ENCODE measurements at regions of chr1 and their contacts with region 1.

Region 1: GRCh38 chr1:240189386-240189989 is 97.8 kb downstream of the FMN2 start:
- DNase-seq: peak; percentile 53
- ATAC-seq: no peak
- H3K4me3 ChIP-seq: no peak overlapping the region
- H3K27ac ChIP-seq: no peak overlapping the region
- H3K4me1 ChIP-seq: no peaks in the 10 kb centered on the region
- H3K27me3 ChIP-seq: no peaks in the 10 kb centered on the region; the same call in 1 of the 2 replicates
- CTCF ChIP-seq: peak; percentile 72
- POLR2A ChIP-seq: no peak
- RAD21 ChIP-seq: peak; percentile 68

Region 2: DNA sequence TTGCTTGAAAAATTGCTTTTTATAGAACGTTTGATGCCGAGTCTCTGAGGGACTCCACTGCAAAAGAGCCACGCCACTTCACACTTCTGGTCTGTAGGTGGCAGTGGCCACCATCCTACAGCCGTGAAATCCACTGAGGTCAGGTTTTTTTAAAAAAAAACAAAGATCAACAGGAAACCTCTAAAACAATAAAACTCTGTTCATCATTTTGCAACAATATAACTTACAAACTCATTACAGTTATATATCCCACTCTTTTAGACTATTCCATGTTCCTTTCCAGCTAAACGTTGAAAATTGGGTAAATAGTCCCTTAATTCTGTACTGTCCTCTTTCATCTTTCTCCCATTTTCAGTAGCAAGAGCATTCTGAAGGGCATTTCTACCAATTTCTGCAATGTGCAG is 162.4 kb before region 1 on chr1:
- CTCF ChIA-PET with region 1: interaction called, 6 read pairs
- POLR2A ChIA-PET with region 1: no interaction called
- dilution Hi-C with region 1: loop called (anchors 25 kb)
- in situ Hi-C with region 1: loop called (anchors 5 kb)
- intact Hi-C with region 1: loop called (anchors 1 kb)
- DNase-seq: peak; percentile 67
- ATAC-seq: peak; percentile 64
- H3K4me3 ChIP-seq: no peak overlapping the region
- H3K27ac ChIP-seq: no peak overlapping the region
- H3K4me1 ChIP-seq: peaks cover 10% of the 10 kb centered on the region
- H3K27me3 ChIP-seq: no peaks in the 10 kb centered on the region
- CTCF ChIP-seq: peak; percentile 98
- POLR2A ChIP-seq: no peak
- RAD21 ChIP-seq: peak; percentile 96

Region 3: DNA sequence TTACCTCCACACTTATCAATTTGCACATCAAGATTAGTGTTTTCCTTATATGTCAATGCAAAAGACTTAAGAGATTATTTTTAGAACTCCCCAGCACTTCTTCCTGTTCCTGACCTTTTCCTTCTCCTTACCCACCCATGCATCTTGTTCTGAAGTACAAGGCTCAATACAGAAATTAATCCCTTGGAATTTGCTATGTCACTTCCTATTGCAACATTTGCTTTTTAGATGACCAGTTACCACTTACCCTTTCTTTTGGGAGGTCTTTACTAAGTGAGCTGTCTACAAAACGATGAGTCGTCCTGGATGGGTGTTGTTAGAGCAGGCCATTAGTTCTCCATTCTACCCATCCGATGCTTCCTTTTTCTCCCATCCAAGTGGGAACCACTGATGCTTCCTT is 123.4 kb after region 1 on chr1:
- CTCF ChIA-PET with region 1: no interaction called
- POLR2A ChIA-PET with region 1: no interaction called
- dilution Hi-C with region 1: no loop called
- in situ Hi-C with region 1: no loop called
- intact Hi-C with region 1: loop called (anchors 5 kb)
- DNase-seq: peak; percentile 94
- ATAC-seq: peak; percentile 58
- H3K4me3 ChIP-seq: no peak overlapping the region
- H3K27ac ChIP-seq: 0 out of 2 replicates have a peak overlapping the region, but pooled peaks have one; percentile 23
- H3K4me1 ChIP-seq: peaks cover 18% of the 10 kb centered on the region
- H3K27me3 ChIP-seq: no peaks in the 10 kb centered on the region
- CTCF ChIP-seq: no peak
- POLR2A ChIP-seq: no peak
- RAD21 ChIP-seq: no peak

Region 4: GRCh38 chr1:240455228-240455821 is 265.8 kb after region 1 on chr1:
- CTCF ChIA-PET with region 1: no interaction called
- POLR2A ChIA-PET with region 1: no interaction called
- dilution Hi-C with region 1: no loop called
- in situ Hi-C with region 1: no loop called
- intact Hi-C with region 1: loop called (anchors 2 kb)
- DNase-seq: peak; percentile 22
- ATAC-seq: peak; percentile 54; the same call in 1 of the 2 replicates
- H3K4me3 ChIP-seq: no peak overlapping the region
- H3K27ac ChIP-seq: no peak overlapping the region
- H3K4me1 ChIP-seq: peaks cover 4% of the 10 kb centered on the region; the same call in 1 of the 2 replicates
- H3K27me3 ChIP-seq: no peaks in the 10 kb centered on the region
- CTCF ChIP-seq: peak; percentile 62
- POLR2A ChIP-seq: no peak
- RAD21 ChIP-seq: peak; percentile 58

Region 5: DNA sequence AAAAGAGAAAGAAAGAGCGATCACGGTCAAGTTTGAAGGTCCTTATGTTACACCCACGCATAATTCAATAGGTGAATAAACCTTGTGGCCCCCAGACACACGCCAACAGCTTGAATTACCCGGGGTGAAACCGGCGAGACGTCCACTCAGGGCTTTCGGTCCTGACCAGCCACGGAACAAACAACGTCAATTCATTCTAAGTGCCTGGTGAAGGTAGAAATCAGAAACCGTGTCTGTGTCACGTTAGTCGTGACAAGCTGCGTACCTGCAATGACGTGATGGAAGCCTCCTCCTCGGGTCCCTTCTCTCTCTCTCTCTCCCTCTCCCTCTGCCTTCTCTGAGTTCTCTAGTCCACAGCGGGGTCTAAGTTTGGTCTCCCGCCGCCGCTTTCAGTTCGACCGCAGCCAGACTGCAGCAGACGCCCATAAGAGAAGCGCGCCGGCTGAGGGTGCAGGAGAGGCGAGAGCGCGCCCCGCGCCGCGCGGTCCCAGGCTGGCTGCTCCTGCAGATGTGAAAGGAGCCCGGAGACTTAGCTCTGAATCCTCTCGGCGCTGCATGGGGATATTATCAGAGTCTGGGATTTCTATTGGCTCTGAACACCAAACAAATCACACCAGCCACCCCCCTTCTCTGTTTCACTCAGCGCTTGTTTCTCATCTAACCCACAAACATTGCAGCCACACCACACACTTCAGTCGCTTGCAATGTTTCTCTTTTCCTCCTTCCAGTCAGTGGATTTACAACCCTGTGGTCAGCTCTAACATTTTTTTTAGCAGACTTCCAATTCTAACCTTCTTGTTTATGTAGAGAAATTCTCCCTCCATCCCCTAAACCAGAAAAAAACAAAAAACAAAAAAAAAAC is 422.4 kb after region 1 on chr1 and contains the start of gene GREM2:
- CTCF ChIA-PET with region 1: interaction called, 3 read pairs
- POLR2A ChIA-PET with region 1: no interaction called
- dilution Hi-C with region 1: no loop called
- in situ Hi-C with region 1: no loop called
- intact Hi-C with region 1: loop called (anchors 2 kb)
- DNase-seq: peak; percentile 95
- ATAC-seq: peak; percentile 96
- H3K4me3 ChIP-seq: peak within 1 kb of the TSS; percentile 97
- H3K27ac ChIP-seq: peak within 1 kb of the TSS; percentile 23
- H3K4me1 ChIP-seq: peaks cover 9% of the 10 kb centered on the region
- H3K27me3 ChIP-seq: no peaks in the 10 kb centered on the region
- CTCF ChIP-seq: no peak
- POLR2A ChIP-seq: peak; percentile 60; the same call in 1 of the 2 replicates
- RAD21 ChIP-seq: no peak
- total RNA-seq, gene GREM2: 3.0 and 5.0 TPM in 2 replicates

Region 6: GRCh38 chr1:240691521-240692338 is 502.2 kb after region 1 on chr1:
- CTCF ChIA-PET with region 1: interaction called, 14 read pairs
- POLR2A ChIA-PET with region 1: no interaction called
- dilution Hi-C with region 1: no loop called
- in situ Hi-C with region 1: loop called (anchors 5 kb)
- intact Hi-C with region 1: loop called (anchors 1 kb)
- DNase-seq: peak; percentile 78
- ATAC-seq: peak; percentile 90
- H3K4me3 ChIP-seq: no peak overlapping the region
- H3K27ac ChIP-seq: peak overlapping the region; percentile 13
- H3K4me1 ChIP-seq: peaks cover 8% of the 10 kb centered on the region
- H3K27me3 ChIP-seq: no peaks in the 10 kb centered on the region; the same call in 1 of the 2 replicates
- CTCF ChIP-seq: peak; percentile 92
- POLR2A ChIP-seq: no peak
- RAD21 ChIP-seq: peak; percentile 98

Region 7: DNA sequence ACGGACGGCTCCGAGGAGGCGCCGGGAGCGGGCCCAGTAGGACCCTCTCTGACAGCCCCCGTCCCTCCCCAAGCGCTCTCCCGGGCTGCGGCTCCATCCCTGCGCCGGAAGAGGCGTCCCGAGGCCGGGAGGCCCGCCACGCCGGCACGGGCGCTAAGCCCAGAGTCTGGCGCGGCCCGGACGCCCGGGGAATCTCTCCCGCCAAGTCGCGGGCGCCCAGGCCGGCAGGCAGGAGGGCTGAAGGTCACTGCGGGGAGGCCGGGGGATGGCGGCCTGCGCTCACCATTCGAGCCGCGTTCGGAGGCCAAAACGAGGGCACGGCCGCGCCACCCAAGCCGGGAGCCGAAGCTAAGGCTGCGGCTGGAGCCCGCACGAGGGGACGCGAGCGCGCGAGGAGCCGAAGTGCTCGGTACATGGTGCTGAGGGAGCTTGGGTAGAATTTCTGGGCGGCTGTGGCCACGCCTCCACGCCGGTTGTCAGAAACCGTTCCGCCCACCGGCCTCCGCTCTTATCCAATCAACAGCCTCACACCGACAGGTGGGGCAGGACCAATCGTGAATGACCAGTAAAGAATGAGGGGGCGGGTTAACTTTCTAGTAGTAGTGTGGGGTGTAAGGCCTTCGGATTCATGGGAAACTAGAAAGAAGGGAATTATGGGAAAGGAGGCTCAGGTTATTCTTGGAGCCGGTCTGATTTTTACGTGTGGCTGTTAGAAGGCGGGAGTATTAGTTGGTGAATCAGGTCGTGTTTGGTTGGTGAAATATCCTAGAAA is 1330.0 kb after region 1 on chr1 and contains the start of gene FH:
- CTCF ChIA-PET with region 1: no interaction called
- POLR2A ChIA-PET with region 1: no interaction called
- dilution Hi-C with region 1: no loop called
- in situ Hi-C with region 1: loop called (anchors 25 kb)
- intact Hi-C with region 1: no loop called
- DNase-seq: peak; percentile 98
- ATAC-seq: peak; percentile 98
- H3K4me3 ChIP-seq: peak within 1 kb of the TSS; percentile 94
- H3K27ac ChIP-seq: peak within 1 kb of the TSS; percentile 77
- H3K4me1 ChIP-seq: 0 out of 2 replicates have a peak, but pooled peaks cover 2% of the 10 kb centered on the region
- H3K27me3 ChIP-seq: peaks cover 8% of the 10 kb centered on the region
- CTCF ChIP-seq: no peak
- POLR2A ChIP-seq: peak; percentile 79
- RAD21 ChIP-seq: no peak
- total RNA-seq, gene FH: 78.7 and 101 TPM in 2 replicates

Measured in IMR-90 (cell line).